GM18951 (cell line): ENCODE measurements at regions of chr6 and their contacts with region 1.

Region 1: DNA sequence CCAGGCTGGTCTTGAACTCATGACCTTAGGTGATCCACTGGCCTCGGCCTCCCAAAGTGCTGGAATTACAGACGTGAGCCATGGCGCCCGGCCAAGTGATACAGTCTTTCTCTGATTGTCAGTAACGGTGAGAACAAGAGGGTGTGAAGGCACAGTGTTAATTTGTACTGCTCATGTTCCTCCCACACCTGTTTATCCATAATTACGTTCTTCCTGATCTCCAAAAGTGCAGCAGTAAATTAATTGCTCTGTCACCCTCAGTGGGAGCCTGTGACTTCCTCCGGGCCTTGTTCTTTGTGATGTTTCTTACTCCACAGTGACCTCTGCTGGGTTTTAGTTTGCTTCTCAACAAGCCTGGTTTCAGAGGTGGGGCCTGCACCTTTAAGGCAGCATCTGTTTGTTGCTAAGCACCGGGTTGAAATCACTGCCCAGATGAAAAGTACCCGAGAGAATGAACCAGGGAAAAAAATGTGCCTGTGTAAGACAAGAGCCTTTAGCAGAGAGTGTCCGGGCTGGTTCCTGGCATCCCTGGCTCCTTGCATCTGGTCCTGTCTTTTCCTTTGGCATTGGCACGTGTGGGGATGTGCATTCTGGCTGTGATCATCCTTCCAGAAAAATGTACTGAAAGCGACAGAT is 89.1 kb upstream of the CLDN20 start:
- POLR2A ChIP-seq: no peak

Region 2: DNA sequence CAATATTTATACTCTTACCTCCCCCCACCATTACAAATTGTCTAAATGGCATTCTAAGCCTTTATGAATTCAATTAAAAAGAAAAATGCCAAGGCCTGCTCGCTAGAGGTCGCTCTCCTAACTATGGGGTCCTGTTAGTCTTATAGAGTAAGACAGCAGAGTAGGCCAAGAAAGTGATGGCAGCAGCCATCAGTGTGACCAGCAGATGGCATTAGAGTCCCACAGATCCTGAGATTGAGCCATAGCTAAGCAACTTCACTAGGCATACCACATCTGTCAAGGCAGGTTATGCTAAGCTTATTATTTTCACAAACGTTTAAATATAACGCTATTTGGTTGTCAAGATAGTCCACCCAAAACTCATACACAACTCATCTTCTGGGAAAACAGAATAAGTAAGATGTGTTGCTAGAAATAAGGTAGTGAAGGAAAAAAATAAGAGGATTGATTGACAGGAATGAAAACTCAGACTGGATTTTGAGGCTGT is 499.0 kb before region 1 on chr6:
- in situ Hi-C with region 1: loop called (anchors 10 kb)
- POLR2A ChIP-seq: no peak

Region 3: DNA sequence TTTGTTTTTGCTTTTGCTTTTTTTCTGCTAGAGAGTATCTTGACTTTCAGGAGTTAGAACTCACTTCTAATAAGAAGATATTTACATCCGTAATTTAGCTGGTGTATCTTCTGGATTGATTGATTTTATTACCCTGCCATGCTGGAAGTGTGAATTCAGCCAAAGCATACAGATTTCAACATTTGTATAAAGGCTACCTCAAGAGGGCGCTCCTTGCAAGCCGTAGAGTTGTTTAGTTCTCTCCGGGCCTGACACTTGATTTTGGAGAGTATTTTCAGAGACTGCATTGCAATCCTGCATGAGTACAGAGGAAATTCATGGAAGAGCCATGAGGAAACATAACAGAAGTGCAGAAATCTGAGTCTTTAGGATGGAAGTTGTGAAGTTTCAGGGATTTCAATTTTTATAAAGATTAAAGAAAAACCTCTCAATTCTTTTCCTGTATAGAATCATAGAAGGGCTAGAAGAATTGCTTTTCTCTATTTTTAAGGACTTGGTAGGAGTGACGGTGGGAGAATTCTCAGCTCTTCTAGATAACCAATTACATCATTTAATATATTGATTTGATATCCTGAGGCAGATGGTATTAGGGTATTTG is 246.3 kb before region 1 on chr6:
- in situ Hi-C with region 1: loop called (anchors 5 kb)
- POLR2A ChIP-seq: no peak

Region 4: GRCh38 chr6:155001482-155001881 is 173.2 kb before region 1 on chr6:
- in situ Hi-C with region 1: no loop called
- POLR2A ChIP-seq: no peak

Region 5: GRCh38 chr6:155523821-155524651 is 349.3 kb after region 1 on chr6:
- in situ Hi-C with region 1: loop called (anchors 25 kb)
- POLR2A ChIP-seq: no peak